Right lobe of liver (tissue), 6 donors: ENCODE measurements at regions of chr7 and their contacts with region 1.

Region 1: DNA sequence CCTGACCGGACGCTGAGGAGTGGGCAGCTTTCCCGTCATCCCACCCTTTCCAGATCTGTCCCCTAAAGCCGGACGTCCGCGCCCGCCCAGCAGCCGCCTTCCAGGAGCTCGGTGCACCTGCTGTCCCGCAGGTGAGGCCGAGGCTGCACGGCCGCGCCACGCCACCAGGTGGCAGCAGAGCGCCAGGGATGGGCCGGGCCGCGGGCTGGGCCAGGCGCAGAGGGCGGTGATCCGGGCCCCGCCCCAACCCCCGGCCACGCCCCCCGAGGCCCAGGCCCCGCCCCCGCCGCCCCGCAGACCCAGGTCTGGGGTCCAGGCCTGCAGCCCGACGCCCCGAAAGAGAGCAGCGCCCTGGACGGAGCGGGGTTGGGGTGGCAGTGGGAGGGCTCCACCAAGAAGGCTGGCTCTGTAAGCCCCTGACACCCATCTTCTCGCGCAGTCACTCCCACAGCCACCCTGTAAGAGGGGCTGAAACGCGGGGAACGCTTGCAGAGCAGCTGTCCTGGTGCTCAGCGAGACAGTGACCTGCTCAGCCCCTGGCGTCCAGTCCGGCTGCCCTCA is 32.2 kb downstream of the FOXL3 start:
- DNase-seq: peak; percentile 74 to 81 (median 79)
- ATAC-seq: peak; percentile 79 to 87 (median 83)
- H3K4me3 ChIP-seq: no peak overlapping the region
- H3K27ac ChIP-seq: no peak overlapping the region
- H3K4me1 ChIP-seq: peaks cover 0 to 21% (median 1%) of the 10 kb centered on the region in 4 donors
- H3K27me3 ChIP-seq: no peaks in the 10 kb centered on the region
- CTCF ChIP-seq: peak; percentile 86 to 98 (median 90)
- POLR2A ChIP-seq: no peak

Region 2: GRCh38 chr7:85074-85882 is 236.9 kb before region 1 on chr7:
- intact Hi-C with region 1: no loop called
- DNase-seq: no peak
- ATAC-seq: no peak
- H3K4me3 ChIP-seq: no peak overlapping the region
- H3K27ac ChIP-seq: no peak overlapping the region
- H3K4me1 ChIP-seq: no peaks in the 10 kb centered on the region
- H3K27me3 ChIP-seq: no peaks in the 10 kb centered on the region
- CTCF ChIP-seq: no peak
- POLR2A ChIP-seq: no peak

Region 3: GRCh38 chr7:768881-769504 is 446.8 kb after region 1 on chr7:
- intact Hi-C with region 1: loop called (anchors 5 kb)
- DNase-seq: no peak
- ATAC-seq: no peak
- H3K4me3 ChIP-seq: no peak overlapping the region
- H3K27ac ChIP-seq: no peak overlapping the region
- H3K4me1 ChIP-seq: no peaks in the 10 kb centered on the region
- H3K27me3 ChIP-seq: no peaks in the 10 kb centered on the region
- CTCF ChIP-seq: no peak
- POLR2A ChIP-seq: no peak

Region 4: DNA sequence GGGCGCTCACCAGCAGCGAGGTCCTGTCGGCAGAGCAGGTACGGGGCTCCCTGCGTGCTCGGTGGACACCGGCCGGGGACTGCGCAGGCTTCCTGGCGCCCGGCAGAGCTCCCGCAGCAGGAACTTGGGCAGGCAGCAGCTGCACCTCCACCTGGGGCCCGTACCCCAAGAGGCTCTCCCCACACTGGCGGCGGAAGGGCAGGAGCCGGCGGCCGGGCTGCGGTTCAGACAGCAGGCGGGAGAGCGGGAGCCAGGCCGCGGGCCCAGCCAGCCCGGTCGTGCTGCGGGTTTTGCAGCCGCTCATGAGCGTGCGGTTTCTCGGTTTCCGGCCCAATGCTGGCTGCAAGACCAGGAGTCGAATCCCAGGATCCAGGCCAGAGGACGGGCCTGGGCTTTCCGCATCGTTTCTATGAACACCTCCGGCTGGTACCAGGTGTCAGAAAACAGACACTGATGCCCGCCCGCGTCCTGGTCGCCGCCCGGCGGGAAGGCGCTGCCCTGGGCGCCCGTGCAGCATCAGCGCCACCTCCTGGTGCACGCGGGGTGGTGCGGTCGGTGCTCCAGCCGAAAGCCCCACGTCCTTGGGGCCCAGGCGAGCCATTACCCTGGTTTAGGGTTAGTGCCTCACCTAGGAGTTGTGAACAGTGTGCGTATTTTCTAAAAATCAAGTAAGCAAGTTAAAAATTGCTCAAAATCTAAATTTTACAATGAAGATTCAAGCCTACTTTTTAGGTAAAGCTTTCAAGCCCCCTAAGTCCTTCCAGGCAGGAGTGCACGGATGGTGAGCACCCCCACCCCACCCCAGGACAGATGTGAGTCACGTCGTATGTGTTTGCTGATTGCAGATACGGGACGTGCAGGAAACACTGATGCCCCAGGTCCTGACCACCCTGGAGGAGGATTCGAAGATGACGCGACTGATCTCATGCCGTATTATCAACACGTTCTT is 452.2 kb after region 1 on chr7:
- intact Hi-C with region 1: loop called (anchors 5 kb)
- DNase-seq: no peak
- ATAC-seq: peak; percentile 73 to 86 (median 79)
- H3K4me3 ChIP-seq: no peak overlapping the region
- H3K27ac ChIP-seq: no peak overlapping the region
- H3K4me1 ChIP-seq: no peaks in the 10 kb centered on the region
- H3K27me3 ChIP-seq: no peaks in the 10 kb centered on the region
- CTCF ChIP-seq: peak; percentile 82 to 89 (median 85)
- POLR2A ChIP-seq: no peak

Region 5: DNA sequence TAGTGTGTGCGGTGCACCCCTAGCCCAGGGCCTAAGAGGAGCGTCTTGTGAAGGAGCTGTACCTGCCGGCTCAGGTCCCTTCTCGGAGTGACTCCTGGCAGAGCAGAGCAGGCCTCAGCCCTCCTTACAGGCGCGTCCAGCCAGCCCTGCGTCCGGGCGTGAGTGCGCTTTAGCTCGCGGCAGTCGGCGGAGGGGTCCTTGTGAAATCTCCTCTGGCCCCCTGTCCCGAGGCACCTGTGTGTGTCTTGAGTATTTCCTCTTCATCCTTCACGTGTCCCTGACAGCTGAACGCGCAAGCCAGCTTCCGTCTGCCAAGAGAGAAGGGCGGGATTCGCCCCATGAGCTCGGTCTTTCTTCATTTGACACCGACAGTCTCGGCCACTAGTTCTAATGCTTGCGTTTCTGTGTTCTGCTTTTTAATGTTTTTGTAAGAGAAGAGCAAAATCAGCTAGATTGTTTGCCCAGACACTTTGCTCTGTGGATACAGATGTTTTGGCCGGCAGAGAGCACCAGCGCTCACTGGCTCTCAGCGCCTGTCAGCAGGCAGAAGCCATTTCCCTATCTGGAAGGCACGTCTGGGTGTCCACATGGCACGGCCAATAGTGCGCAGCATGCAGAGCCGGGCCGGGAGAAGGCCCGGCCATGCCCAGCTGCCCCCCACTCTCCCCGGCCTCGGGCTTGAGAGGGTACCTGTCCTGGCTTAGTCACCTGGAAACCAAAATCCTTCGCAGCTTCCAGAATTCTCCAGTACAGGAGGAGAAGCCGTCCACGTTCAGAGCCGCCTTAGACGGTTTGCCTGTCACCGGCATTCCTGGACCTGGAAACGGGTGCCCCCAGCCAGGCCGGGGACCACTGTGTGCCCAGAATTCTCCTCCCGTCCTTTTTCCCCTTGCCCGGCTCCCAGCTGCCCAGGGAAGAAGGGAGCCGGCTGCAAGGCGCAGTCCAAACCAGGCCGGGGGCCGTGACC is 561.1 kb after region 1 on chr7:
- intact Hi-C with region 1: loop called in 1 of 2 experiments (anchors 10 kb)
- DNase-seq: peak in 2 of 3 donors; percentile 33 to 65
- ATAC-seq: peak; percentile 11 to 36 (median 24)
- H3K4me3 ChIP-seq: no peak overlapping the region
- H3K27ac ChIP-seq: peak overlapping the region in 1 of 3 donors; percentile 39
- H3K4me1 ChIP-seq: peaks cover 0 to 82% (median 22%) of the 10 kb centered on the region in 4 donors
- H3K27me3 ChIP-seq: no peaks in the 10 kb centered on the region
- CTCF ChIP-seq: peak in 1 of 4 donors; percentile 11
- POLR2A ChIP-seq: no peak